A549 (cell line): ENCODE measurements at regions of chr14 and their contacts with region 1.

Region 1: GRCh38 chr14:74945823-74946682 is 9.3 kb downstream of the PGF start:
- DNase-seq: peak; percentile 68 to 95
- ATAC-seq: peak; percentile 80 to 92
- H3K4me3 ChIP-seq: no peak overlapping the region
- H3K27ac ChIP-seq: peak overlapping the region; percentile 37 to 65; a peak in 4 of 6 replicates
- H3K4me1 ChIP-seq: peaks cover 19% of the 10 kb centered on the region
- CTCF ChIP-seq: peak; percentile 83
- EP300 ChIP-seq: no peak
- POLR2A ChIP-seq: no peak
- RAD21 ChIP-seq: peak; percentile 81 to 83

Region 2: GRCh38 chr14:74905375-74906142 is 40.5 kb before region 1 on chr14:
- CTCF ChIA-PET with region 1: interaction called, 11 read pairs
- POLR2A ChIA-PET with region 1: no interaction called
- DNase-seq: peak; percentile 51 to 60
- ATAC-seq: peak; percentile 33 to 74; a peak in 3 of 6 replicates
- H3K4me3 ChIP-seq: no peak overlapping the region
- H3K27ac ChIP-seq: peak overlapping the region in 1 of 2 experiments; percentile 44; a peak in 1 of 6 replicates
- H3K4me1 ChIP-seq: no peaks in the 10 kb centered on the region; the same call in 2 of the 3 replicates
- CTCF ChIP-seq: peak; percentile 85
- EP300 ChIP-seq: no peak
- POLR2A ChIP-seq: no peak
- RAD21 ChIP-seq: peak; percentile 57 to 60; a peak in 4 of 5 replicates

Region 3: DNA sequence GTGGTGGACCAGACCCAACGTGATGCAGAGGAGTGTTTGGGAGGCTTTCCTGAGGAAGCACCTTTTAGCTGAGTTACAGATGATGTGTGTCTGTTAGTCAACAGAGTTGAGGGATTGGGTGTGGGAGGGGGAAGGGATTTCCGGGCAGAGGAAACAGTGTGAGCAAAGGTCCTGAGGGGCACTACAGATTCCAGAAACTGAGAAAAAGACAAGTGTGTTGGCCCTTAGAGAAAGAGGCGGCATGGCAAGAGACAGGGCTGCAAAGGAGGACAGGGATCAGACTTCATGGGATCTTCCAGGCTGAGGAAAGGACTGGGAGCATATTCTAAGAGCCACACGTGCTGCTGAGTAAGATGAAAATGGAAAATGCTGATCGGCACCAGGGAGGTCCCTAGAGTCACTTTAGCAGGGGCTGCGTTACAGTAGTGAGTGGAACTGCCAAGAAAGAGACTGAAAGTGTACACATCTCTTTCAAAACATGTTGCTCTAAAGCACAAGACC is 13.6 kb before region 1 on chr14:
- CTCF ChIA-PET with region 1: interaction called, 50 read pairs
- POLR2A ChIA-PET with region 1: no interaction called
- DNase-seq: no peak
- ATAC-seq: peak in 1 of 2 experiments; percentile 51; a peak in 3 of 6 replicates
- H3K4me3 ChIP-seq: no peak overlapping the region
- H3K27ac ChIP-seq: peak overlapping the region in 1 of 2 experiments; percentile 31; a peak in 1 of 6 replicates
- H3K4me1 ChIP-seq: peaks cover 3% of the 10 kb centered on the region; the same call in 1 of the 3 replicates
- CTCF ChIP-seq: no peak
- EP300 ChIP-seq: no peak
- POLR2A ChIP-seq: no peak
- RAD21 ChIP-seq: no peak

Region 4: GRCh38 chr14:74984236-74985025 is 38.4 kb after region 1 on chr14:
- CTCF ChIA-PET with region 1: interaction called, 11 read pairs
- POLR2A ChIA-PET with region 1: no interaction called
- DNase-seq: no peak
- ATAC-seq: no peak
- H3K4me3 ChIP-seq: no peak overlapping the region
- H3K27ac ChIP-seq: no peak overlapping the region
- H3K4me1 ChIP-seq: no peaks in the 10 kb centered on the region
- CTCF ChIP-seq: no peak
- EP300 ChIP-seq: no peak
- POLR2A ChIP-seq: no peak
- RAD21 ChIP-seq: no peak

Region 5: DNA sequence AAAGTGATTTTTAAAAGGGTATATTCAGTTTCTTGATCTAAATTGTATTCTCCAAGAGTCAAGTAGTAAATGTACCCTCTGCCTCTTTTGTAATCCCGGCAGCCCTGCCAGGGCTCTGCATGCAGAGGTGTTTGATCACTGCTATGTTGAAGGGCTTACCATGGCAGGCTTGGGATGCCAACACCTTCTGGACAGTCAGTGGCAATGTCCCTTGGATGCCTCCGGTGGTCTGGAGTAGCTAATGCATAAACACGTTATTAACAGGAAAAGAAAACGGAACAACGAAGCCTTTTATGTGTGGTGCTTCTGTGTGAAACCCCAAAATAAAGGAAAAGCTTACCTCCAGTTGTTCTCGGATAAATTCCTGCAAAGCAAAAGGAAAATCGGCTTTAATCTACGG is 76.6 kb after region 1 on chr14:
- CTCF ChIA-PET with region 1: interaction called, 25 read pairs
- POLR2A ChIA-PET with region 1: no interaction called
- DNase-seq: peak; percentile 53 to 59
- ATAC-seq: peak; percentile 90 to 91
- H3K4me3 ChIP-seq: no peak overlapping the region
- H3K27ac ChIP-seq: no peak overlapping the region
- H3K4me1 ChIP-seq: no peaks in the 10 kb centered on the region
- CTCF ChIP-seq: peak; percentile 18; the same call in 1 of the 3 replicates
- EP300 ChIP-seq: no peak
- POLR2A ChIP-seq: no peak
- RAD21 ChIP-seq: peak in 1 of 2 experiments; percentile 36; a peak in 2 of 5 replicates

Region 6: GRCh38 chr14:75081660-75082229 is 135.7 kb after region 1 on chr14:
- CTCF ChIA-PET with region 1: interaction called, 12 read pairs
- POLR2A ChIA-PET with region 1: no interaction called
- DNase-seq: no peak
- ATAC-seq: no peak
- H3K4me3 ChIP-seq: no peak overlapping the region
- H3K27ac ChIP-seq: no peak overlapping the region
- H3K4me1 ChIP-seq: no peaks in the 10 kb centered on the region
- CTCF ChIP-seq: no peak
- EP300 ChIP-seq: no peak
- POLR2A ChIP-seq: no peak
- RAD21 ChIP-seq: no peak

Region 7: DNA sequence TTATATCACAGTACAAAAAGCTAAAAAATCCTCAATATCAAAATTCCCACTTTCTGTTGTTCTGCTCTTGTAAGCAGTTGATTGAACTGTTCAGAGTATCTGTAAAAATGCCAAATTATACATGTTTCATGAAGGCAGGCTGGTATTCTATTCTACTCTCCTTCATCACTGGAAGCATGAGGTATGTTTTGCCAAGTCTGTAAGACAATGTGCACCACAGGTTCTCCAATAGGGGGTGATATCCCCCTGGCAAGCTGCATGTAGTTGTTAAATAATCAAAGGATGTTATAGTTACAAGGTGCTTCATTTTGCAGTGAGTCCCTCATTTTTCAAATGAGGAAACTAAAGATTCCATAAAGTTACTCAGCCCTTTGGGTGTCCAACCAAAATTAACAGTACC is 195.9 kb after region 1 on chr14:
- CTCF ChIA-PET with region 1: no interaction called
- POLR2A ChIA-PET with region 1: no interaction called
- DNase-seq: peak in 1 of 2 experiments; percentile 55
- ATAC-seq: peak; percentile 50 to 82; a peak in 3 of 6 replicates
- H3K4me3 ChIP-seq: no peak overlapping the region
- H3K27ac ChIP-seq: 0 out of 6 replicates have a peak overlapping the region, but pooled peaks of 1 of the 2 experiments have one; percentile 17
- H3K4me1 ChIP-seq: no peaks in the 10 kb centered on the region
- CTCF ChIP-seq: peak; percentile 42
- EP300 ChIP-seq: no peak
- POLR2A ChIP-seq: no peak
- RAD21 ChIP-seq: peak in 1 of 2 experiments; percentile 55; a peak in 2 of 5 replicates